AG04450 (cell line): ENCODE measurements at regions of chr13 and their contacts with region 1.

Region 1: DNA sequence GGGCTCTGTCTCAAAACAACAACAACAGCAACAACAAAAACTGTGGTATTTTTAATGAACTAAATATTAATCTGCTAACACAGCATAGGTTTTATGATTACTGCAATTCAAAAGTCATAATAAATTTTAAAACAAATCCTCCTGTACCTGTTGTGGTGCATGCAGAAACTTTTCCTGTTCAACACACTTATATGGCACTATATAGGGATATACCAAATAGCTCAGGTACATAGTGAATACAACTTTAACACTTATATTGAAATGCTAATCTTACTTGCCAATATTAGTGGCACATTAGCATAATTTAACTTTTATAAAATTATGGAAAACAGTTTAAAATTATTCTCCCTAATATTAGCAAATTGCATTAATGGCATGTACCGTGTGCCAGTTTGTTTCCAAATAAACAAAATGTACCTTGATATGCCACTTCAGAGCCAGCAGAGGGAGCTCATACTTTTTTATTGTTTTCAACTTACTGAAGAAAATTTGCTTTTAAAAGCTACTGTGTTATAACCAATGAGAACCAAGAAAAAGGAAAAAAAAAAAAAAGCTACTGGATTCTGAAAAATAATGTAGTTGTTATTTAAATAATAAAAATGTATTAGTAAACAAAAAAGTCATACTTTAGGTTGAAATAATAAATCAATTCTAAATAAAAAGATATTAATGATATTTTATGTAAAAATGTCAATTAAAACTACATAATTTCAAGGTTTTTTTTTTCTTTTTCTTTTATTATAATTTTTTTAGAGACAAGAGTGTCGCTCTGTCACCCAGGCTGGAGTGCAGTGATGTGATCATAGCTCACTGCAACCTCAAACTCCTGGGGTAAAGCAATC is 18.0 kb upstream of the RBM26 start:
- DNase-seq: peak; percentile 10
- H3K4me3 ChIP-seq: no peak overlapping the region
- H3K27ac ChIP-seq: no peak overlapping the region
- H3K27me3 ChIP-seq: no peaks in the 10 kb centered on the region
- CTCF ChIP-seq: peak; percentile 70

Region 2: GRCh38 chr13:79398915-79399314 is 25.1 kb before region 1 on chr13:
- CTCF ChIA-PET with region 1: interaction called, 14 read pairs
- POLR2A ChIA-PET with region 1: no interaction called
- DNase-seq: no peak
- H3K4me3 ChIP-seq: no peak overlapping the region
- H3K27ac ChIP-seq: no peak overlapping the region
- H3K27me3 ChIP-seq: no peaks in the 10 kb centered on the region
- CTCF ChIP-seq: no peak

Region 3: DNA sequence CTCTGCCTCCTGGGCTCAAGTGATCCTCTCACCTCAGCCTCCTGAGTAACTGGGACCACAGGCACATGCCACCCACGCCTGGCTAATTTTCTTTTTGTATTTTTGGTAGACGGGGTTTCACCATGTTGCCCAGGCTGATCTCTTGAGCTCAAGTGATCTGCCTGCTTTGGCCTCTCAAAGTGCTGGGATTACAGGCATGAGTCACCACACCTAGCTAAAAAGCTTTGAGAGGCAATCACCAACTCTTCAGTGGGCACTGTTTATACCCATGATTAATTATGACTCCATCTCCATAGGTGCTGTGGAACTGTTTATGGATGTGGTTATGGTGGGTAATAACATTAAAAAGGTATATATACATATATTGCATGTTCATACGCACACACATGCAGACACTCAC is 10.5 kb before region 1 on chr13:
- CTCF ChIA-PET with region 1: interaction called, 14 read pairs
- POLR2A ChIA-PET with region 1: no interaction called
- DNase-seq: no peak
- H3K4me3 ChIP-seq: no peak overlapping the region
- H3K27ac ChIP-seq: no peak overlapping the region
- H3K27me3 ChIP-seq: no peaks in the 10 kb centered on the region
- CTCF ChIP-seq: no peak

Region 4: GRCh38 chr13:79440958-79441528 is 17.0 kb after region 1 on chr13:
- CTCF ChIA-PET with region 1: interaction called, 39 read pairs
- POLR2A ChIA-PET with region 1: no interaction called
- DNase-seq: no peak
- H3K4me3 ChIP-seq: no peak overlapping the region
- H3K27ac ChIP-seq: no peak overlapping the region
- H3K27me3 ChIP-seq: no peaks in the 10 kb centered on the region
- CTCF ChIP-seq: no peak

Region 5: GRCh38 chr13:79480954-79481684 is 57.1 kb after region 1 on chr13 and contains the start of gene NDFIP2:
- CTCF ChIA-PET with region 1: interaction called, 58 read pairs
- POLR2A ChIA-PET with region 1: no interaction called
- DNase-seq: peak; percentile 58
- H3K4me3 ChIP-seq: peak within 1 kb of the TSS; percentile 85
- H3K27ac ChIP-seq: peak within 1 kb of the TSS; percentile 31
- H3K27me3 ChIP-seq: no peaks in the 10 kb centered on the region
- CTCF ChIP-seq: no peak
- polyA plus RNA-seq, gene NDFIP2: 32.5 and 33.0 TPM in 2 replicates

Region 6: GRCh38 chr13:79519255-79519654 is 95.2 kb after region 1 on chr13:
- CTCF ChIA-PET with region 1: interaction called, 12 read pairs
- POLR2A ChIA-PET with region 1: no interaction called
- DNase-seq: no peak
- H3K4me3 ChIP-seq: no peak overlapping the region
- H3K27ac ChIP-seq: no peak overlapping the region
- H3K27me3 ChIP-seq: no peaks in the 10 kb centered on the region
- CTCF ChIP-seq: no peak

Region 7: GRCh38 chr13:79541426-79542049 is 117.5 kb after region 1 on chr13:
- CTCF ChIA-PET with region 1: interaction called, 454 read pairs
- POLR2A ChIA-PET with region 1: interaction called, 11 read pairs
- DNase-seq: peak; percentile 46
- H3K4me3 ChIP-seq: no peak overlapping the region
- H3K27ac ChIP-seq: no peak overlapping the region
- H3K27me3 ChIP-seq: no peaks in the 10 kb centered on the region
- CTCF ChIP-seq: peak; percentile 70